Posterior vena cava (tissue), 2 donors: ENCODE measurements at regions of chr2 and their contacts with region 1.

Region 1: DNA sequence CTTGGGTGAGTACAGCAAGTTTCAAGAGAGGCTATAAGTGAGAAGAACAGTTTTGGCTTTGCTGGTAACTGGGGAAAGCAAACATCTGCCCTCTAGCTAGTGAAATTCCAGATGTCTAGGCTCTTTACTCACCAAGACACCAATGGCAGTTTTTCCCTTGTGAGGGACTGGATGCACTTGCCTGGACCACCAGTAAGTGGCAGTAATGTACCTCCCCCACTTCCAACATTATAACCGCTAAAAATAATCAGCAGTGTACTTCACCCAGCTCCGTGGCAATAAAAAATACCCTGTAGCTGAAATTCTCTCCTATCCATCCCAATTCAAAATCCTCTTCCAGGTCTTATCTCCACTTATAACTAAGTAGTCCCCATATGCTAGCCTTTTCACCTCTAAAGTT is 383.9 kb downstream of the ARHGAP15 start:
- DNase-seq: no peak

Region 2: GRCh38 chr2:143553261-143553660 is 40.2 kb after region 1 on chr2:
- intact Hi-C with region 1: no loop called
- DNase-seq: no peak

Region 3: GRCh38 chr2:143936848-143937722 is 424.0 kb after region 1 on chr2:
- intact Hi-C with region 1: loop called in 1 of 2 experiments (anchors 10 kb)
- DNase-seq: peak; percentile 83